ENCODE measurements at regions of chr1 and their contacts with region 1.

Region 1: GRCh38 chr1:209685821-209686220 is 10.6 kb downstream of the G0S2 start:
- DNase-seq: peak; percentile 33 to 56 (median 54)
- H3K4me3 ChIP-seq: peak overlapping the region; percentile 23 to 32
- H3K4me3 Mint-ChIP-seq: peak overlapping the region; percentile 68 to 88 (median 78)
- H3K27ac ChIP-seq: peak overlapping the region; percentile 14
- H3K27ac Mint-ChIP-seq: peak overlapping the region; percentile 36 to 89 (median 81)
- H3K4me1 ChIP-seq: peaks cover 46% of the 10 kb centered on the region
- H3K4me1 Mint-ChIP-seq: peaks cover 39 to 52% (median 41%) of the 10 kb centered on the region in 4 donors
- H3K27me3 ChIP-seq: no peaks in the 10 kb centered on the region
- H3K27me3 Mint-ChIP-seq: no peaks in the 10 kb centered on the region

Region 2: DNA sequence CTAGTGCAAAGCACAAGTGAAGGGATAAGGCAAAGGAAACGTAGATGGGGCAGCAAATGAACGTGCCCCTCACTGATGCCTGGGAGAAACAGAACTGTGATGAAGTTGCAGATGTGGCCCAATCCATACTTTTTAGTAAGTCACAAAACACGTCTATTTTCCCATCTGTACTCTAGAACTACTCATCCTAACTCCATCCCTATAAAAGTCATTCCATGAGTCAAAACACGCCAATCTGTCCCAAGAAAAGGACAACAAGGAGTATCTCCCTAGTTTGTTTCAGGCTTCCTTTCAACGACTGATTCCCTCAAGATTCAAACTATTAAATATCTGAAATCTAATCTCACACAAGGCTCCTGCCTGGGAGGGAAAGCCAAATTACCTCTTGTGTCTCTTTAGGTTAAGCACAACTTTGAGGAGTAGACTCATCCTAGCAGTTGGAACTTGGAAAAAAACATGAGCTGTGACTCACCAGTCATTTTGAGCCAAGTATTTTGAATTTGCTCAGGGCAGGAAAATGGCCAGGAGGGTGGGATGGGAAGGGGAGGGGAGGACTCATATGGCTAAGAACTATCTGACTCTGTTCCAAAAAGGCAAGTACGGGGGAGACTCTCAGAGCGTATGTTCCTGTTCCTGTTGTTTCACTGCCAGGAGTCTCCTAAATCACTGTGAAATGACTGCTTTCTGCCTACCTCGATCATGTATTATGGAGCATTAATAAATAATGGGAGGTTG is 316.8 kb before region 1 on chr1:
- CTCF ChIA-PET with region 1: no interaction called
- POLR2A ChIA-PET with region 1: no interaction called
- intact Hi-C with region 1: no loop called
- DNase-seq: no peak
- H3K4me3 ChIP-seq: no peak overlapping the region
- H3K4me3 Mint-ChIP-seq: no peak overlapping the region
- H3K27ac ChIP-seq: no peak overlapping the region
- H3K27ac Mint-ChIP-seq: no peak overlapping the region
- H3K4me1 ChIP-seq: no peaks in the 10 kb centered on the region
- H3K4me1 Mint-ChIP-seq: no peaks in the 10 kb centered on the region
- H3K27me3 ChIP-seq: no peaks in the 10 kb centered on the region
- H3K27me3 Mint-ChIP-seq: peaks cover 2 to 16% of the 10 kb centered on the region in 2 donors

Region 3: DNA sequence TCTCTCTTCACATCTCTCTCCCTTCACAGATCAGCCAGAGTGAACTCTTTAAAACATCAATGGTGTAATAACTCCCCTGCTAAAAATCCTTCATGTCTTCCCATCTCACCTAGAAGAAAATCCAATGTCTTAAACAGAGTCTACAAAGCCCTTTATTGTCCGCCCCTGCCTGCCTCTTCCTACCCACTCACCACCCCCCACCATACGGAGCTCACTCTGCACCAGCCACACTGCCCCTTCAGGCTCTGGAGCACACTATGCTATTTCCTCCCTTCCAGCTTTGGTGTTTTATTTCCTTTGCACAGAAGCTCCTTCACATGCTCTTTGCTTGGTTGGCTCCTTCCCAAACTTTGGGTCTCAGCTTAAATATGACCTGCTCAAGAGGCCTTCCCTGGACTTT is 92.1 kb before region 1 on chr1:
- CTCF ChIA-PET with region 1: no interaction called
- POLR2A ChIA-PET with region 1: no interaction called
- intact Hi-C with region 1: no loop called
- DNase-seq: no peak
- H3K4me3 ChIP-seq: no peak overlapping the region
- H3K4me3 Mint-ChIP-seq: no peak overlapping the region
- H3K27ac ChIP-seq: no peak overlapping the region
- H3K27ac Mint-ChIP-seq: no peak overlapping the region
- H3K4me1 ChIP-seq: no peaks in the 10 kb centered on the region
- H3K4me1 Mint-ChIP-seq: no peaks in the 10 kb centered on the region
- H3K27me3 ChIP-seq: no peaks in the 10 kb centered on the region
- H3K27me3 Mint-ChIP-seq: peaks cover 7 to 14% of the 10 kb centered on the region in 2 donors

Region 4: DNA sequence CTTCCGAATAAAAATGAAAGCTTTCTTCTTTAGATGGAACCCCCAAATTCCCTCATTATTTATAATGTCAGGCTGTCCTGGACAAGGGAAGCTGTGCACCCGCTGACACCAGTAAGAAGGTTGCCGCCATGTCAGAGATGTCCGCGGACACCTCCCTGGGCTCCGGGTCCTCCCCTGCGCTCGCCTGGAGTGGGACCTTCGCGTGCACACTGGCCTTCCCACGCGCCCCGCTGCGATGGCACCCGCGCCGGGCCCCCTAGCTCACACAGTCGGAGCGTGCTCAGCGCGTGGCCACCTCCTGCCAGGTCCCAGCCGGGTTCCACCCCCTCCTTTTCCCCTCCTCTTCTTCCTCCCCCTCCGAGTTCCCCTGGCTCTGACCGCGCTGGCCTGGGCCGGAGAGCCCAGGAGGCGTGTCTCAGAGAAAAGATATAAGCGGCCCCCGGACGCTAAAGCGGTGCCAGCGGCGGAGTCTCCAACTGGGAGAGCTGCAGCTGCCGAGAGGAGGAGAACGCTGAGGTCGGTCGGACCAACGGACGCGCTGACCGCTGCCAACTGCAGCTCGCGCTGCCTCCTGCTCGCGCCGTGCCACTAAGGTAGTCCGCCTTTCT is 10.8 kb before region 1 on chr1 and contains the start of gene G0S2:
- CTCF ChIA-PET with region 1: interaction called, 26 read pairs
- POLR2A ChIA-PET with region 1: interaction called, 25 read pairs
- intact Hi-C with region 1: no loop called
- DNase-seq: peak in 4 of 5 donors; percentile 7 to 38 (median 22)
- H3K4me3 ChIP-seq: peak within 1 kb of the TSS in 1 of 2 donors; percentile 50
- H3K4me3 Mint-ChIP-seq: peak within 1 kb of the TSS; percentile 64 to 90 (median 82)
- H3K27ac ChIP-seq: no peak within 1 kb of the TSS
- H3K27ac Mint-ChIP-seq: peak within 1 kb of the TSS; percentile 14 to 92 (median 36)
- H3K4me1 ChIP-seq: peaks cover 50% of the 10 kb centered on the region
- H3K4me1 Mint-ChIP-seq: peaks cover 38 to 75% (median 56%) of the 10 kb centered on the region in 4 donors
- H3K27me3 ChIP-seq: no peaks in the 10 kb centered on the region
- H3K27me3 Mint-ChIP-seq: peaks cover 8 to 13% of the 10 kb centered on the region in 2 donors
- total RNA-seq, gene G0S2: 1.2 TPM in 1 of 2 experiments, not detected in the other

Region 5: GRCh38 chr1:209790286-209791193 is 104.7 kb after region 1 on chr1:
- CTCF ChIA-PET with region 1: no interaction called
- POLR2A ChIA-PET with region 1: no interaction called
- intact Hi-C with region 1: no loop called
- DNase-seq: no peak
- H3K4me3 ChIP-seq: no peak overlapping the region
- H3K4me3 Mint-ChIP-seq: no peak overlapping the region
- H3K27ac ChIP-seq: no peak overlapping the region
- H3K27ac Mint-ChIP-seq: no peak overlapping the region
- H3K4me1 ChIP-seq: no peaks in the 10 kb centered on the region
- H3K4me1 Mint-ChIP-seq: no peaks in the 10 kb centered on the region
- H3K27me3 ChIP-seq: no peaks in the 10 kb centered on the region
- H3K27me3 Mint-ChIP-seq: peaks cover 1 to 18% of the 10 kb centered on the region in 2 donors

Measured in CD4-positive, alpha-beta memory T cell (primary cell).